ENCODE measurements at regions of chr5 and their contacts with region 1.

Region 1: DNA sequence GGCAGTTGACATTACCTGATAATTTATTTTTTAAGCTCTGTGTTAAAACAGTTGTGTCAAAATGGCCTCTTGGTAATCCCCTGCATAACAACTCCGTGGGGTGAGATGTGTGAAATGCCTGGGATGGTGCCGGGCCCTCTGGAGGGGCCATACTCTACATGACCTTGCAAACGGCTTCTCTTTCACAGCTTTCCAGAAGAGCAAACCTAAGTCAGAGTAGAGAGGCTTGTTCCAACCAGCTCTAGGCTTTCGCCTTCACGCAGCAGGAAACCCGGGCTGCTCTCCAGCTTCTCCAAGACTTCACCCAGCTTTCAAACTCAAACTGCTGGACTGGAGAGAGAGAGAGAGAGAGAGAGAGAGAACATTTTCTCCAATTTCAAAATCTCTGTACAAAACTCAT is 120.1 kb downstream of the SNX18 start:
- DNase-seq: peak; percentile 15

Region 2: GRCh38 chr5:54457094-54457862 is 180.4 kb before region 1 on chr5:
- in situ Hi-C with region 1: no loop called
- DNase-seq: no peak

Region 3: DNA sequence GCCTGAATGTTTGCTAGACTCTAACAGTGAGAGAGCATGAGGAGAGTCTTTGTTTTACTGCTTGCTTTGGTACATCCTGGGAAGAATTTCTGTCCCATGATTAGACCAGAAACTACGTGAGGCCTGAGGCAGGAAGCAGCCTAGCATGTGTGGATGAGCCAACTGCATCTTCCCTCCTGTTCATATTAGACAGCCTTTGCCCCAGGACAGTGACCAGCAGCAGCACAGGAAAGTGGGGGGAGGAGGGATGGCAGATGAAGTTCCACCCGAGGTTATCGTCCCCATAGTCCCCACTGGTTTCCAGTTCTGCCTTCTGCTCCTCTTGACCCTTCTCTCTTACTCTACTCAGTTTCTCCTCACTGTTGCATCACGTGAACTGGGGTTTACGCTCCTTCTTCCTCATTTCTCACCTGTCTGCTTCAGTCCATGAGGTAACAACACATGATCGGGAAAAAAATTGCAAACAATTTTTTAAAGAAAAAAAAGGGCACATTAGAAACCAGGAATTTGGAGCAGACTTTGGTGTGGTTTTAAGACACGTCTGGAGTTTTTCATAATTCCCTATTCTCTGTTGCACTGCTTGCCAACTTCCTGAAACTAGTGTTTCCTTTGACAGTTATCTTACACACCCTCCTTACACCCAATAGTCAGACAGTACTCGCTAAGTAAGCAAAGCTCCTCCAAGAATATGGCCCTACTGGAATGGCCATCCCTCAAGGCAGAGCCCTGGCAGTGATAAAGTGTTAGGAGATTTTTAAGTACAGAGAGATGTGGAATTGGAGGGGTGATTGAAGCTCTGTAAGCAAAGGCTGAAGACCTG is 36.0 kb before region 1 on chr5:
- in situ Hi-C with region 1: no loop called
- DNase-seq: no peak

Region 4: GRCh38 chr5:54725391-54726280 is 88.0 kb after region 1 on chr5:
- in situ Hi-C with region 1: loop called (anchors 5 kb)
- DNase-seq: peak; percentile 88

Region 5: DNA sequence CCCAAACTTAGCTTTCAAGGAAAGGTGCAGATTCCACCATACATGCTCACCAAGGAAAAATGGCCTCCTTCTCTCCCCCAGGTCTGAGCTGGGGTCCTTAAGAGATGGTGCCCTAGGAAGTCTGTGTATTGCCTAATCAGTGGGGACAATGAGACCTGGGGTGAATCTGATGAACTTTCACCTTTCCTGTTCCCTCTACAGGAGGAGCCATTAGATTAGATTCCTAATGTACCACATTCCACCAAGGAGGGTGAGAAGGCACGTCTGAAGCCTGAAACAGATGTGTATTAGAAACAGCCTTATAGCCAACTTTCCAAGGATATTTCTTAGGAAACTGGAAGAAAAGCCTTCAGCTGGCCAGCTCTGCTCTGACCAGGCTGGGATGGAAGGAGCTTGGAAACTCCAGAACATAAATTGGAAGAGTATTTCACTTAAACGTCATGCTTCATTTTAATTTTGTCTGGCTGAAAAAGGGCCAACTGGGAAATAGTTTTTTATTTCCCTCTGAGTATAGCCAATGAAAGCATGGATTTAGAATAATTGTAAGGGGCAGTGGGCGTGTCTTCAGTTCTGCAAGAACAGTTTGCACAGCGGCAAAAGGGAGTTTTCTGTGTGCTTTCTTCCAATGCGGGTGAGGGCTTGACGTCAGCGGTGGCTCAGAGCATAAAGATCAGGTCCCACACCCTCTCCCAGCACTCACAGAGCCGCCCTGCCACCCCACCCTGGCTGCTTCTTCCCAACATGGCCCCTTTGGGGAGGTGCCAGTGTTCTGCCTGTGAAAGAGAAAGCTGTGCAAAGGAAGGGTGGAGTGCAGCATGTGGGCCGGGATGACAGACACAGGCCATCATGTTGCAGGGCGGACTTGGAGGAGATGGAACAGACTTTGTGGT is 136.9 kb after region 1 on chr5:
- in situ Hi-C with region 1: no loop called
- DNase-seq: no peak

Measured in G401 (cell line).